ENCODE measurements at regions of chr16 and their contacts with region 1.

Region 1: GRCh38 chr16:11224096-11224893 is 31.7 kb downstream of the SOCS1 start:
- DNase-seq: peak; percentile 36 to 67 (median 48)
- ATAC-seq: peak; percentile 68
- H3K4me3 ChIP-seq: peak overlapping the region; percentile 49
- H3K4me3 Mint-ChIP-seq: peak overlapping the region; percentile 78 to 87 (median 80)
- H3K27ac ChIP-seq: peak overlapping the region; percentile 91
- H3K27ac Mint-ChIP-seq: peak overlapping the region; percentile 97 to 99 (median 98)
- H3K4me1 ChIP-seq: peaks cover 30 to 36% of the 10 kb centered on the region in 2 donors
- H3K4me1 Mint-ChIP-seq: peaks cover 37 to 73% (median 52%) of the 10 kb centered on the region in 7 donors
- H3K27me3 ChIP-seq: no peaks in the 10 kb centered on the region
- H3K27me3 Mint-ChIP-seq: no peaks in the 10 kb centered on the region

Region 2: DNA sequence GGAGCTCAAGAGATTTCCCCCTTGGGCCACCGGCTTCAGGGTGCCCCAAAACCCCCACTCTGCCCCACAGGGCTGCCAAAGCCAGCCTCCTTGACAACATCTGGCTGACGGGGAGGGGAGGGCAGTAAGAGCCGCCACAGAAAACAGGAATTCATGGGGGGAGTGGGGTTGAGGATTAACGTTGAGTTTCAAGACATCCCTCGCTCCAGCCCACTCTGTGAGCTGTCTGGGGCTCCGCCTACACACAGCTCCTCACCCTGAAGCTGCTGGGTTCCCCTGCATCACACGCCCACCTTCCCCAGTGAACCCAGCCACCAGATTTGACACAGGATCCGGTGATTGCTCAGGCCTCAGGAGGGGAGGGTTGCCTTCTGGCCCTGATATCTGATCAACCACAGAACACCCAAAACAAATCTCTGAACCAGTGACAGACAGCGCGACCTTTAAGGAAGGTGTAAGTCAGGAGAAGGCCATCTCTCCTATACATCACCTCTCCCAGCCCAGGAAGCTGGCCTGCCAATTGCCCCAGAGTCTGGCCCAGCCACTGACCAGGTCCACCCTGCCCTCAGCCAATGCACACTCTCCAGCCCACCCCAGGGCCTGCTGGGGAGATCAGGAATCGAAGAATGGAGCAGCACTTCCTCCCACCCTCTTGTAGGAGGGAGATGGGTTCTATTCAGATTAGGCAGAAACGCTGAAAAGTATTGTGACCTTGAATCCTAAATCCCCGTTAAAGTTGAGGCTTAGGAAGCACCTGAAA is 147.9 kb before region 1 on chr16:
- CTCF ChIA-PET with region 1: no interaction called
- POLR2A ChIA-PET with region 1: no interaction called
- intact Hi-C with region 1: no loop called
- DNase-seq: peak in 1 of 9 donors; percentile 75
- ATAC-seq: peak; percentile 65
- H3K4me3 ChIP-seq: no peak overlapping the region
- H3K4me3 Mint-ChIP-seq: peak overlapping the region in 1 of 10 donors; percentile 62
- H3K27ac ChIP-seq: no peak overlapping the region
- H3K27ac Mint-ChIP-seq: peak overlapping the region in 7 of 9 donors; percentile 24 to 83 (median 66)
- H3K4me1 ChIP-seq: peaks cover 5 to 24% of the 10 kb centered on the region in 2 donors
- H3K4me1 Mint-ChIP-seq: peaks cover 27 to 91% (median 54%) of the 10 kb centered on the region in 7 donors
- H3K27me3 ChIP-seq: no peaks in the 10 kb centered on the region
- H3K27me3 Mint-ChIP-seq: no peaks in the 10 kb centered on the region

Region 3: GRCh38 chr16:11205754-11206581 is 18.3 kb before region 1 on chr16:
- CTCF ChIA-PET with region 1: no interaction called
- POLR2A ChIA-PET with region 1: interaction called, 3 read pairs
- intact Hi-C with region 1: loop called in 1 of 2 experiments (anchors 2 kb)
- DNase-seq: no peak
- ATAC-seq: peak; percentile 50
- H3K4me3 ChIP-seq: no peak overlapping the region
- H3K4me3 Mint-ChIP-seq: peak overlapping the region in 1 of 10 donors; percentile 65
- H3K27ac ChIP-seq: no peak overlapping the region
- H3K27ac Mint-ChIP-seq: peak overlapping the region in 3 of 9 donors; percentile 59 to 93 (median 85)
- H3K4me1 ChIP-seq: no peaks in the 10 kb centered on the region
- H3K4me1 Mint-ChIP-seq: peaks cover 0 to 43% (median 13%) of the 10 kb centered on the region in 7 donors
- H3K27me3 ChIP-seq: no peaks in the 10 kb centered on the region
- H3K27me3 Mint-ChIP-seq: no peaks in the 10 kb centered on the region

Measured in naive thymus-derived CD4-positive, alpha-beta T cell (primary cell).